ENCODE measurements at regions of chr1 and their contacts with region 1.

Region 1: GRCh38 chr1:206776229-206776628 is 3.9 kb upstream of the IL10 start:
- DNase-seq: no peak
- H3K4me3 ChIP-seq: no peak overlapping the region
- H3K4me3 Mint-ChIP-seq: no peak overlapping the region
- H3K27ac ChIP-seq: no peak overlapping the region
- H3K27ac Mint-ChIP-seq: no peak overlapping the region
- H3K4me1 ChIP-seq: peaks cover 21% of the 10 kb centered on the region
- H3K4me1 Mint-ChIP-seq: peaks cover 29 to 38% (median 35%) of the 10 kb centered on the region in 3 donors
- H3K27me3 ChIP-seq: no peaks in the 10 kb centered on the region
- H3K27me3 Mint-ChIP-seq: no peaks in the 10 kb centered on the region

Region 2: DNA sequence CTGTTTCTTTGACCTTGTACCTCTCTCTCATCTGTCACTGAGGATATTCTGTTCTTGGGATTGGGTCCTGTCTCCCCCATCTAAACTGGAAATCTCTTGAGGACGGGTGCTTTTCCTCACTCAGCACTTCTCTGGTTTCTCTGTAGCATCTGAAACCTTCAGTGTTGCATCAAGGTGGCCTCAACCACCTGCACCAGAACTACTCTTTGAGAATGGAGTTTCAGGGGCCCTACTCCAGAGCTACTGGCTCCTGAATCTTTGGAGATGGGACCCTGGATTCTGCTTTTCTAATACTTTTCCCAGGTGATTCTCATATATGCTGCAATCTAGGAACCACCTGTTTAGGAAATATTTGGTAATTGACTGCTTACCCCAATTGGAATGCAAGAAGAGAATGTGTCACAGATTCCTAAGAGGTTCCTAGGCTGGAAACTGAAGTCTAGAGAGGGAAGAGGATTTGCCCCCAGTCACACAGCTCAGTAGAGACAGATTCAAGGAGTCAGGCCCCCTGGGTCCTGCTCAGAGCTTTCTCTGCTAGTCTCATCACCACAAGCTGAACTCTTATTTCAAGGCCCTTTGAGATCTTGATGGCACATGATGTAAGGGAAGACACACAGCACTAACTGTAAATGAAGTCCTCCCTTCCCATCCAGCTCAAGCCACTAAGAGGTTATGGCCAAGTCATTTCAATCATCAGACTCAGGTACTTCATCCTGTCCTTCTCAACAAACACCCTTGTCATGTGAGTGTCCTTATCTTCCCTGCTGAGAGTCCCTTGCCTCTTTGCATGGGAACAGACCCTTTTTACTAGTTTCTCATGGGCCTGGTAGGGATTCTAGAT is 212.6 kb before region 1 on chr1:
- CTCF ChIA-PET with region 1: no interaction called
- POLR2A ChIA-PET with region 1: interaction called, 13 read pairs
- DNase-seq: no peak
- H3K4me3 ChIP-seq: peak overlapping the region; percentile 54
- H3K4me3 Mint-ChIP-seq: peak overlapping the region; percentile 63 to 89 (median 81)
- H3K27ac ChIP-seq: no peak overlapping the region
- H3K27ac Mint-ChIP-seq: peak overlapping the region; percentile 84 to 97 (median 95)
- H3K4me1 ChIP-seq: peaks cover 92% of the 10 kb centered on the region
- H3K4me1 Mint-ChIP-seq: peaks cover 89 to 96% (median 95%) of the 10 kb centered on the region in 3 donors
- H3K27me3 ChIP-seq: no peaks in the 10 kb centered on the region
- H3K27me3 Mint-ChIP-seq: peaks cover 0 to 4% of the 10 kb centered on the region in 2 donors